Heart left ventricle (tissue), 16 donors: ENCODE measurements at regions of chr22 and their contacts with region 1.

Region 1: GRCh38 chr22:30423982-30424963 is 1.3 kb upstream of the MTFP1 start:
- DNase-seq: peak; percentile 99 to 100 (median 99)
- ATAC-seq: peak; percentile 90 to 96 (median 94)
- H3K4me3 ChIP-seq: peak overlapping the region; percentile 41 to 88 (median 71)
- H3K27ac ChIP-seq: peak overlapping the region; percentile 87 to 99 (median 96)
- H3K4me1 ChIP-seq: peaks cover 4 to 54% (median 33%) of the 10 kb centered on the region in 12 donors
- H3K27me3 ChIP-seq: no peaks in the 10 kb centered on the region
- CTCF ChIP-seq: no peak
- POLR2A ChIP-seq: peak in 1 of 2 donors; percentile 58

Region 2: GRCh38 chr22:30386960-30387827 is 37.1 kb before region 1 on chr22 and contains the start of gene RNF215:
- intact Hi-C with region 1: no loop called
- DNase-seq: peak; percentile 78 to 92 (median 85)
- ATAC-seq: peak; percentile 68 to 94 (median 92)
- H3K4me3 ChIP-seq: peak within 1 kb of the TSS; percentile 11 to 88 (median 62)
- H3K27ac ChIP-seq: peak within 1 kb of the TSS in 10 of 12 donors; percentile 53 to 85 (median 67)
- H3K4me1 ChIP-seq: peaks cover 0 to 24% (median 9%) of the 10 kb centered on the region in 12 donors
- H3K27me3 ChIP-seq: no peaks in the 10 kb centered on the region
- CTCF ChIP-seq: peak; percentile 81 to 99 (median 94)
- POLR2A ChIP-seq: no peak
- total RNA-seq, gene RNF215: 3.3 to 12.2 (median 6.7) TPM

Region 3: GRCh38 chr22:30490399-30490798 is 66.1 kb after region 1 on chr22:
- intact Hi-C with region 1: no loop called
- DNase-seq: peak in 1 of 5 donors; percentile 28
- ATAC-seq: no peak
- H3K4me3 ChIP-seq: no peak overlapping the region
- H3K27ac ChIP-seq: no peak overlapping the region
- H3K4me1 ChIP-seq: no peaks in the 10 kb centered on the region
- H3K27me3 ChIP-seq: peaks cover 0 to 24% (median 0%) of the 10 kb centered on the region in 9 donors
- CTCF ChIP-seq: peak in 1 of 12 donors; percentile 8
- POLR2A ChIP-seq: no peak

Region 4: GRCh38 chr22:30582788-30583545 is 158.7 kb after region 1 on chr22:
- intact Hi-C with region 1: loop called in 1 of 10 experiments (anchors 10 kb)
- DNase-seq: no peak
- ATAC-seq: no peak
- H3K4me3 ChIP-seq: no peak overlapping the region
- H3K27ac ChIP-seq: no peak overlapping the region
- H3K4me1 ChIP-seq: no peaks in the 10 kb centered on the region
- H3K27me3 ChIP-seq: no peaks in the 10 kb centered on the region
- CTCF ChIP-seq: no peak
- POLR2A ChIP-seq: no peak

Region 5: GRCh38 chr22:30591588-30592359 is 167.5 kb after region 1 on chr22 and contains the start of gene PES1:
- intact Hi-C with region 1: loop called in 2 of 10 experiments (anchors 5 to 10 kb)
- DNase-seq: peak; percentile 94 to 97 (median 96)
- ATAC-seq: peak; percentile 100
- H3K4me3 ChIP-seq: peak within 1 kb of the TSS; percentile 59 to 95 (median 82)
- H3K27ac ChIP-seq: peak within 1 kb of the TSS; percentile 43 to 91 (median 81)
- H3K4me1 ChIP-seq: peaks cover 0 to 23% (median 15%) of the 10 kb centered on the region in 12 donors
- H3K27me3 ChIP-seq: no peaks in the 10 kb centered on the region
- CTCF ChIP-seq: no peak
- POLR2A ChIP-seq: peak in 1 of 2 donors; percentile 45
- total RNA-seq, gene PES1: 15.7 to 39.8 (median 27.8) TPM

Region 6: DNA sequence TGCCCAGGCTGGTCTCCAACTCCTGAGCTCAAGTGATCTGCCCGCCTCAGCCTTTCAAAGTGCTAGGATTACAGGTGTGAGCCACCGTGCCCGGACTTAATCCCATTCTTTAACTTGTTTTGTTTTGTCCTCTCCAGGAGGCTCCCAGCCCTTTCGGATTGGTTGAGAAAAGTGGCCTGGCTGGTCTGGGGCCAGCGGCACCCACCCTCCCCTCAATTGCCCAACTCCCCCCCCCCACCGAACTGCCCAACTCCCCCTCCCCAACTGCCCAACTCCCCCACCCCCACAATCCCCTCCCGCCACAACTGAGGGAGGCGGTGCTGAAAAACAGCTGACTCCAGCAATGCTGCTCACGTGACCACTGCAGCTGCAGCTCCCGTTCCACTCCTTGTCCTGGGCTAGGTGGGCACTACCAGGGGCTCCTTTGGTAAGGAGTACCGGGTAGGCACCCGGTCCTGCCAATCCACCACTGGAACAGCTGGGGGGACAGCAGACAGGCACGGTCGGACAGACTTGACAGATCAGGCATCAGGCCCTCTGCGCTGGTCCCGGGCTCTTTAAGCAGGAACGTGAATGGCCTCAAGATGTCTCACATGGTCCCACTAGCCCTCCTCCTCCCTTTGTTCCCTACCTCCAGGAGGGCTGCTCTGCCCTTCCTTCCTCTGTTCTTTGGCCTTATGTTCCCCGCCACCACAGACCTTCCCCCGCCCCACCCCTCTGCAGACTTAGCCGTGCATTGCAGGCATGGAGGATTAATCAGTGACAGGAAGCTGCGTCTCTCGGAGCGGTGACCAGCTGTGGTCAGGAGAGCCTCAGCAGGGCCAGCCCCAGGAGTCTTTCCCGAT is 182.4 kb after region 1 on chr22 and contains the start of gene TCN2:
- intact Hi-C with region 1: loop called in 2 of 10 experiments (anchors 10 kb)
- DNase-seq: peak; percentile 72 to 80 (median 77)
- ATAC-seq: peak; percentile 81 to 90 (median 85)
- H3K4me3 ChIP-seq: peak within 1 kb of the TSS; percentile 30 to 80 (median 66)
- H3K27ac ChIP-seq: peak within 1 kb of the TSS; percentile 45 to 89 (median 80)
- H3K4me1 ChIP-seq: peaks cover 0 to 58% (median 34%) of the 10 kb centered on the region in 12 donors
- H3K27me3 ChIP-seq: no peaks in the 10 kb centered on the region
- CTCF ChIP-seq: no peak
- POLR2A ChIP-seq: peak in 1 of 2 donors; percentile 40
- total RNA-seq, gene TCN2: 11.2 to 69.9 (median 19.5) TPM